ENCODE measurements at regions of chr15 and their contacts with region 1.

Region 1: DNA sequence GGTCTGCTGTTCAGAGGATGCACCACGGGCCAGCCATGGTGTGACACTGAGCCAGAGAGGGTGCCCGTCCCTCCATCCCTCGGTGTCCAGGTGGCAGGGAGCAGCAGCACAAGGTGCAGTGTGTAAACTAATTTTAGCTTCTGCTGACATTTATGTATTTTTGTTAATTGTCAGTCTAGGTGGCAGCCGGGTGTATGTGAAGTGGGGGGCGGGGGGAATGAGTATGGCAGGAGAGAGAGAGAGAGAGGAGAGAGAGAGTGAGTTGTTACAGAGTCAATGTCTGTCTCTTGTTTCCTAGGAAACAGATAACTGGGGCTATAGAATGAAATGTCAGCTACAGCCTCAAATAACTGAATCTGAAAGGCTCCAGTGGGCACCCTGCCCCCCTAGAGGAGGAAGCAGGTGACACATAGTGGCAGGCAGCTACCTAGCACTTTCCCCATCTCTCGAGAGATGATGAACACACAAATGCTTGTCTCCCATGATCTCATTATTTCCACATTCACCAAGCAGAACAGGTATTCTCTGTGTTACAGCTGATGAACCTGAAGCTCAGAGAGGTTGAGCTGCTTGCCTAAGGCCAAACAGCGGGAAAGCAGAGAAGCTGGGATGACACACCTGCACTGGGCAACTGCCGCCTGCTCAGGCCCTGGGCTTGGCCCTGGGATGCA is 24.7 kb downstream of the RASGRF1 start:
- DNase-seq: no peak
- ATAC-seq: no peak
- H3K4me3 ChIP-seq: no peak overlapping the region
- H3K27ac ChIP-seq: peak overlapping the region in 1 of 12 donors; percentile 79
- H3K4me1 ChIP-seq: no peaks in the 10 kb centered on the region
- H3K27me3 ChIP-seq: peaks cover 0 to 4% (median 0%) of the 10 kb centered on the region in 9 donors
- CTCF ChIP-seq: no peak
- POLR2A ChIP-seq: no peak

Region 2: DNA sequence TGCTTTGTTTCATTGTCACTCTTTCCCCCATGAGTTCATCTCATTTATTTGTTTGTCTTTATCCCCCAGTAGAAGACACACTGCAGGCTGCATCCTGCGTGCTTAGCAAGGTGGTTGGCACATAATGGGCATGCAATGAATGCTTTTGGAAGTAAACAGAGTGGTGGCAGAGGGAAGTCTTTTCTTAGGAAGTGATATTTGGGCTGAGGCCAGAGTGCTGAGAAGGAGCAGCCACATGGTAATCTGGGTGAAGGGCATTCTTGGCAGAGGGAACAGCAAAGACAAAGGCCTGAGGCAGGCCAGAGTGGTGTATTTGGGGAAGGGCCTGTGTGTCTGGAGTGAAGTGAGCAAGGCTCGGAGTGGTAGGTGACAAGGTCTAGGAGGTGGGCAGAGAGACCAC is 236.9 kb before region 1 on chr15:
- intact Hi-C with region 1: loop called in 1 of 10 experiments (anchors 10 kb)
- DNase-seq: peak in 1 of 5 donors; percentile 19
- ATAC-seq: peak in 2 of 4 donors; percentile 21 to 41
- H3K4me3 ChIP-seq: no peak overlapping the region
- H3K27ac ChIP-seq: no peak overlapping the region
- H3K4me1 ChIP-seq: peaks cover 0 to 43% (median 10%) of the 10 kb centered on the region in 12 donors
- H3K27me3 ChIP-seq: peaks cover 0 to 3% (median 0%) of the 10 kb centered on the region in 9 donors
- CTCF ChIP-seq: no peak
- POLR2A ChIP-seq: no peak

Region 3: GRCh38 chr15:79168922-79169456 is 103.1 kb after region 1 on chr15:
- intact Hi-C with region 1: no loop called
- DNase-seq: peak in 3 of 5 donors; percentile 34 to 61 (median 60)
- ATAC-seq: peak; percentile 57 to 89 (median 64)
- H3K4me3 ChIP-seq: no peak overlapping the region
- H3K27ac ChIP-seq: peak overlapping the region in 5 of 12 donors; percentile 3 to 64 (median 43)
- H3K4me1 ChIP-seq: peaks cover 0 to 30% (median 9%) of the 10 kb centered on the region in 12 donors
- H3K27me3 ChIP-seq: peaks cover 0 to 11% (median 0%) of the 10 kb centered on the region in 9 donors
- CTCF ChIP-seq: peak in 3 of 12 donors; percentile 21 to 44 (median 36)
- POLR2A ChIP-seq: no peak

Measured in heart left ventricle (tissue), 16 donors.